ENCODE measurements at regions of chr7 and their contacts with region 1.

Region 1: GRCh38 chr7:142811154-142811737 is 40.5 kb downstream of the PRSS2 start:
- DNase-seq: peak in 4 of 14 experiments; percentile 59 to 87 (median 86)
- ATAC-seq: no peak
- H3K4me3 ChIP-seq: no peak overlapping the region
- H3K4me3 Mint-ChIP-seq: peak overlapping the region; percentile 62
- H3K27ac ChIP-seq: peak overlapping the region; percentile 95 to 99
- H3K27ac Mint-ChIP-seq: peak overlapping the region; percentile 98
- H3K4me1 ChIP-seq: peaks cover 77% of the 10 kb centered on the region
- H3K4me1 Mint-ChIP-seq: peaks cover 99% of the 10 kb centered on the region
- H3K27me3 ChIP-seq: no peaks in the 10 kb centered on the region
- H3K27me3 Mint-ChIP-seq: no peaks in the 10 kb centered on the region
- CTCF ChIP-seq: peak; percentile 78

Region 2: GRCh38 chr7:142391191-142391992 is 419.9 kb before region 1 on chr7:
- CTCF ChIA-PET with region 1: no interaction called
- POLR2A ChIA-PET with region 1: interaction called, 13 read pairs
- intact Hi-C with region 1: no loop called
- DNase-seq: peak in 13 of 14 experiments; percentile 9 to 68 (median 34)
- ATAC-seq: peak; percentile 68
- H3K4me3 ChIP-seq: peak overlapping the region; percentile 22
- H3K4me3 Mint-ChIP-seq: peak overlapping the region; percentile 69
- H3K27ac ChIP-seq: no peak overlapping the region
- H3K27ac Mint-ChIP-seq: peak overlapping the region; percentile 42
- H3K4me1 ChIP-seq: no peaks in the 10 kb centered on the region
- H3K4me1 Mint-ChIP-seq: peaks cover 9% of the 10 kb centered on the region
- H3K27me3 ChIP-seq: no peaks in the 10 kb centered on the region
- H3K27me3 Mint-ChIP-seq: no peaks in the 10 kb centered on the region
- CTCF ChIP-seq: no peak

Region 3: DNA sequence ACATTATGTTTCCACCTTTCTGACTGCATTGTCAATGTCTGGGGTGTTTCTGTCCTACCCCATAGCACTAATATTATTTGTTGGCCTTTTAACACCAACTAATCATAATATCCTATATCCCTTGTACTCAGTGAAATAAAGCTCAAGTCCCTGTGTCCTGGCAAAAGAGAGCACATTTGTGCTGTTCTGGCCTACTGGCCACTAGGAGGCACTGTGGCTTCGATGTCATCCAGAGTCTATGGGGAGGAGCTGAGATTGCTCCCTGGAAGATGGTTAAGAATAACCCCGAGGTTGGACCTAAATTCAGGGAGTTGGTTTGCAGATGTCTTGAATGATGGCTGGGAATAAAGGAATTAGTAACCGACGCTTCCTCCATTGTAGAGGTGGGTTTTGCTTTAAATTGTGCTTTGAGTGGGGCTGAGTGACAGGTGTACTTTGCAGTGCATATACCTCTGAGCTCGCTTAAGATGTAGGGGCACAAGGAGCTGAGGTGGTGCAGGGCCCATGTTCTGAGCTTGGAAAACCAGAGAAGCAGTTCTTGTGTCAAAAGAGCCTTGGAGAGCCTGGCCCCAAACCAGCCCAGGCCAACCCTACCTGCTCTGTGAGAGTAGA is 253.2 kb before region 1 on chr7:
- CTCF ChIA-PET with region 1: interaction called, 3 read pairs
- POLR2A ChIA-PET with region 1: interaction called, 13 read pairs
- intact Hi-C with region 1: loop called in 1 of 2 experiments (anchors 5 kb)
- DNase-seq: peak; percentile 17 to 75 (median 45)
- ATAC-seq: peak; percentile 84
- H3K4me3 ChIP-seq: peak overlapping the region; percentile 29
- H3K4me3 Mint-ChIP-seq: no peak overlapping the region
- H3K27ac ChIP-seq: no peak overlapping the region
- H3K27ac Mint-ChIP-seq: peak overlapping the region; percentile 53
- H3K4me1 ChIP-seq: peaks cover 3% of the 10 kb centered on the region
- H3K4me1 Mint-ChIP-seq: peaks cover 5% of the 10 kb centered on the region
- H3K27me3 ChIP-seq: no peaks in the 10 kb centered on the region
- H3K27me3 Mint-ChIP-seq: no peaks in the 10 kb centered on the region
- CTCF ChIP-seq: peak; percentile 75

Region 4: GRCh38 chr7:142632291-142633134 is 178.7 kb before region 1 on chr7:
- CTCF ChIA-PET with region 1: interaction called, 21 read pairs
- POLR2A ChIA-PET with region 1: interaction called, 195 read pairs
- intact Hi-C with region 1: loop called (anchors 1 to 2 kb)
- DNase-seq: peak; percentile 22 to 83 (median 44)
- ATAC-seq: peak; percentile 42
- H3K4me3 ChIP-seq: no peak overlapping the region
- H3K4me3 Mint-ChIP-seq: no peak overlapping the region
- H3K27ac ChIP-seq: no peak overlapping the region
- H3K27ac Mint-ChIP-seq: peak overlapping the region; percentile 54
- H3K4me1 ChIP-seq: peaks cover 8% of the 10 kb centered on the region
- H3K4me1 Mint-ChIP-seq: peaks cover 15% of the 10 kb centered on the region
- H3K27me3 ChIP-seq: no peaks in the 10 kb centered on the region
- H3K27me3 Mint-ChIP-seq: no peaks in the 10 kb centered on the region
- CTCF ChIP-seq: peak; percentile 58

Region 5: DNA sequence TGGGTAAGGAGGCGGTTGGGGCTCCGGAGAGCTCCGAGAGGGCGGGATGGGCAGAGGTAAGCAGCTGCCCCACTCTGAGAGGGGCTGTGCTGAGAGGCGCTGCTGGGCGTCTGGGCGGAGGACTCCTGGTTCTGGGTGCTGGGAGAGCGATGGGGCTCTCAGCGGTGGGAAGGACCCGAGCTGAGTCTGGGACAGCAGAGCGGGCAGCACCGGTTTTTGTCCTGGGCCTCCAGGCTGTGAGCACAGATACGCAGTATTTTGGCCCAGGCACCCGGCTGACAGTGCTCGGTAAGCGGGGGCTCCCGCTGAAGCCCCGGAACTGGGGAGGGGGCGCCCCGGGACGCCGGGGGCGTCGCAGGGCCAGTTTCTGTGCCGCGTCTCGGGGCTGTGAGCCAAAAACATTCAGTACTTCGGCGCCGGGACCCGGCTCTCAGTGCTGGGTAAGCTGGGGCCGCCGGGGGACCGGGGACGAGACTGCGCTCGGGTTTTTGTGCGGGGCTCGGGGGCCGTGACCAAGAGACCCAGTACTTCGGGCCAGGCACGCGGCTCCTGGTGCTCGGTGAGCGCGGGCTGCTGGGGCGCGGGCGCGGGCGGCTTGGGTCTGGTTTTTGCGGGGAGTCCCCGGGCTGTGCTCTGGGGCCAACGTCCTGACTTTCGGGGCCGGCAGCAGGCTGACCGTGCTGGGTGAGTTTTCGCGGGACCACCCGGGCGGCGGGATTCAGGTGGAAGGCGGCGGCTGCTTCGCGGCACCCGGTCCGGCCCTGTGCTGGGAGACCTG is 14.4 kb before region 1 on chr7:
- CTCF ChIA-PET with region 1: interaction called, 135 read pairs
- POLR2A ChIA-PET with region 1: interaction called, 5,733 read pairs
- intact Hi-C with region 1: loop called (anchors 1 to 2 kb)
- DNase-seq: peak in 6 of 14 experiments; percentile 15 to 68 (median 54)
- ATAC-seq: peak; percentile 5
- H3K4me3 ChIP-seq: peak overlapping the region; percentile 100
- H3K4me3 Mint-ChIP-seq: peak overlapping the region; percentile 97
- H3K27ac ChIP-seq: peak overlapping the region; percentile 95 to 99
- H3K27ac Mint-ChIP-seq: peak overlapping the region; percentile 98
- H3K4me1 ChIP-seq: peaks cover 67% of the 10 kb centered on the region
- H3K4me1 Mint-ChIP-seq: peaks cover 77% of the 10 kb centered on the region
- H3K27me3 ChIP-seq: no peaks in the 10 kb centered on the region
- H3K27me3 Mint-ChIP-seq: no peaks in the 10 kb centered on the region
- CTCF ChIP-seq: no peak

Region 6: DNA sequence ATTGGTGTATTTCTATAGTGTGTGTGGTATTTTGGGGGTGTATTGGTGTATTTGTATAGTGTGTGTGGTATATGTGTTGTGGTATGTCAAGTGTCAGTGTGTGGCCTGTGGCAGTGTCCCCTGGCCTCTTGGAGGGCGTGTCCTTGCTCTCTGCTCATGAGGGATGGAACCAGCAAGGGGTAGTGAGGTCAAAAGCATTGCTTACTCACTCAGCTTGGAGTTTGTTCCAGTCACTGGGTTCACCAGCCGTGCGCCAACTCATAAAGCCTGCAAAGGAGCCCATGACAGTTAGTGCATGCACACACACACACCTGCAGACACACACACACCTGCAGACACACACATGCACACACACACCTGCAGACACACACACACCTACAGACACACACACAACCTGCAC is 78.6 kb after region 1 on chr7:
- CTCF ChIA-PET with region 1: no interaction called
- POLR2A ChIA-PET with region 1: no interaction called
- intact Hi-C with region 1: no loop called
- DNase-seq: no peak
- ATAC-seq: no peak
- H3K4me3 ChIP-seq: no peak overlapping the region
- H3K4me3 Mint-ChIP-seq: no peak overlapping the region
- H3K27ac ChIP-seq: no peak overlapping the region
- H3K27ac Mint-ChIP-seq: no peak overlapping the region
- H3K4me1 ChIP-seq: no peaks in the 10 kb centered on the region
- H3K4me1 Mint-ChIP-seq: no peaks in the 10 kb centered on the region
- H3K27me3 ChIP-seq: no peaks in the 10 kb centered on the region
- H3K27me3 Mint-ChIP-seq: no peaks in the 10 kb centered on the region
- CTCF ChIP-seq: no peak

Region 7: DNA sequence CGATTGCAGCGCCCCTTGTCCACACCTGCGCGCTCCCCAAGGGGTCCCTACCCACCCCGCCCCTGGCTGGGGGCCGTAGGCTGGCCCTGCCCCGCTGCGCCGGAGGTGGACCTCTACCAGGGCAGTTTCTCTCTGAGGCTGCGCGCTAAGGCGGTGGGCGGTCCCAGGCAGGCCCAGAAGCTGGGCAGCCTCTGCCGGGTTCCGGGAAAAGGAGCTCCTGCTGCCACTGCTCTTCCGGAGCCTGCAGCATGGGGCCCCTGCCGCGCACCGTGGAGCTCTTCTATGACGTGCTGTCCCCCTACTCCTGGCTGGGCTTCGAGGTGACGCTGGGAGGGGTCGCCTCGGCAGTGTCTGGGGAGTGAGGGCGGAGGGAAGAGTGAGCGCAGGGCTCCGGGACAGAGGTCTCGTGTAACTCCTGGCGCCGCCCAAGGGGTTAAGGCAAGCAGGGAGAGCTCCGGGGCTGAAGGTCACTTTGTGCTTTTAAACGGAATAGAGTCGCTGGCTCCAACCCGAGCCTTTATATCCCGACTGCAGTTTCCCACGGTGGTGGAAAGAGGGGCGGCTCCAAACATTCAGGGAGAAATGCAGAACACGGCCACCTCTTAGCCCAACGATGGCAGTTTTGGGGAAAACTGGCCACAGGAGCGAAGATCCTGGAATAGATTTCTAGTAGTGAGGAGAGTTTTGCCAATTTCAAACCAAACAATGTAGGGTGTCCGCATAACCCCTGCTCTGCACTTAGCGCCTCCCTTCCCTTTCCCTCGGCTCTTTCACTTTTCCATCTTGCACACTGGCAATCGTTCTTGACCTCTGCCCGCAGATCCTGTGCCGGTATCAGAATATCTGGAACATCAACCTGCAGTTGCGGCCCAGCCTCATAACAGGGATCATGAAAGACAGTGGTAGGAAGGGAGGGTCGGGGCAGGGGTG is 452.3 kb after region 1 on chr7 and contains the start of gene GSTK1:
- CTCF ChIA-PET with region 1: no interaction called
- POLR2A ChIA-PET with region 1: interaction called, 14 read pairs
- intact Hi-C with region 1: no loop called
- DNase-seq: peak; percentile 53 to 87 (median 77)
- ATAC-seq: peak; percentile 96
- H3K4me3 ChIP-seq: peak within 1 kb of the TSS; percentile 98
- H3K4me3 Mint-ChIP-seq: peak within 1 kb of the TSS; percentile 98
- H3K27ac ChIP-seq: peak within 1 kb of the TSS; percentile 74
- H3K27ac Mint-ChIP-seq: peak within 1 kb of the TSS; percentile 95
- H3K4me1 ChIP-seq: peaks cover 49% of the 10 kb centered on the region
- H3K4me1 Mint-ChIP-seq: peaks cover 64% of the 10 kb centered on the region
- H3K27me3 ChIP-seq: no peaks in the 10 kb centered on the region
- H3K27me3 Mint-ChIP-seq: no peaks in the 10 kb centered on the region
- CTCF ChIP-seq: no peak
- total RNA-seq, gene GSTK1: 245 to 259 TPM